ENCODE measurements at regions of chr3 and their contacts with region 1.

Region 1: DNA sequence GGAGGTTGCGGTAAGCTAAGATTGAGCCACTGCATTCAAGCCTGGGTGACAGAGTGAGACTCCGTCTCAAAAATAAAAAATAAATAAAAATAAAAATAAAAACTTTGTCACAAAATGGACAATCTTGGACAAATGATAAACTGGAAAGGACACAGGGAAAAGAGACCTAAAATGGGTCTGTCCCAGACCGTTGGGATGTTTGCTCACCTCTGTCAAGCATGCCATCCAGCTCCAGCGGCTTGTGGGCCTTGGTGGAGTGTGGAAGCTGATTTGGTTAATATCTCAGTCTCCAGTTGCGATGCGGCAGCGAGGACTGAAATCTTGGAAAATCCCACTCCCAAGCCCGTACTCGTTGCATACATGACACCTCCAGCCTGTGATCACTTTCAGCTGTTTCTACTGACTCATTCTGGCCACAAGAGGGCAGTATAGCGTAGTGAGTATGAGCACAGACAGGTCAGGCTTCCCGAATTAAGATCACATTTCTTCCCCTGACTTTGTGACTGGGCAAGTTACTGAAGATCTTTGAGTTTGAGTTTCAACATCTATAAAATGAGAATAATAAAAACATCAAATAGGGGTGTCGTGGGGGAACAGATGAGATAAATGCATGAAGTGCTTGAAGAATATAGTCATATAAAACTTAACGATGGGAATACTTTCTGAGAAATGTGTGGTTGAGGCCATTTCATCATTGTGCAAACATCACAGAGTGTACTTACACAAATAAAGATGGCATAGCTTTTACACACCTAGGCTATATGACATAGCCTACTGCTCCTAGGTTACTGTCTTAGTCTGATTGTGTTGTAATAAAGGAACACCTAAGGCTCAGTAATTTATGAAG is 19.6 kb upstream of the MOBP start:
- DNase-seq: peak; percentile 81
- ATAC-seq: peak; percentile 98
- H3K4me3 ChIP-seq: no peak overlapping the region
- H3K27ac ChIP-seq: no peak overlapping the region
- H3K4me1 ChIP-seq: 0 out of 4 replicates have a peak, but pooled peaks cover 0 to 2% of the 10 kb centered on the region in 2 experiments
- H3K27me3 ChIP-seq: no peaks in the 10 kb centered on the region
- CTCF ChIP-seq: peak; percentile 80 to 91 (median 86)
- POLR2A ChIP-seq: no peak
- RAD21 ChIP-seq: peak; percentile 83

Region 2: DNA sequence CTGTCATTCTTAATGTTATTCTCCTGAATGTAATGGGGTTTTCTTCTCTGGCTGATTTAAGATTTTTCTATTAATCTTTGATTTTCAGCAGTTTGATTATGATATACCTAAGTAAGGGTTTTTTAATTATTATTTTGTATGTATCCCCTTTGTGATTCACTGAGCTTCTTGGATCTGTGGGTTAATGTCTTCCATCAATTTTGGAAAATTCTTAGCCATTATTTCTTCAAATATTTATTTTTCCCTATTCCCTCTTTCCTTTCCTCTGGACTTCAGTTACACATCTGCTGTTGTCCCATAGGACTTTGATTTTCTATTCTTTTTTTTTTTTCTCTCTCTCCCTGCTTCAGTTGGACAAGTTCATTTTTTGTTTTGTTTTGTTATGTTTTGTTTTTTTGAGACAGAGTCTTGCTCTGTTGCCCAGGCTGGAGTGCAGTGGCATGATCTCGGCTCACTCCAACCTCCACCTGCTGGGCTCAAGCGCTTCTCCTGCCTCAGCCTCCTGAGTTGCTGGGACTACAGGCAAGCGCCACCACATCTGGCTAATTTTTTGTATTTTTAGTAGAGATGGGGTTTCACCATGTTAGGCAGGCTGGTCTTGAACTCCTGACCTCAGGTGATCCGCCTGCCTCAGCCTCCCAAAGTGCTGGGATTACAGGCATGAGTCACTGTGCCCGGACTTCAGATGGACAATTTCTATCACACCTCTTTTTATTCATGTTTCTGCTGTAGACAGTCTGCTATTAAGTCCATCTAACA is 1060.7 kb before region 1 on chr3:
- CTCF ChIA-PET with region 1: no interaction called
- POLR2A ChIA-PET with region 1: no interaction called
- RAD21 ChIA-PET with region 1: no interaction called
- intact Hi-C with region 1: no loop called
- DNase-seq: no peak
- ATAC-seq: no peak
- H3K4me3 ChIP-seq: no peak overlapping the region
- H3K27ac ChIP-seq: no peak overlapping the region
- H3K4me1 ChIP-seq: no peaks in the 10 kb centered on the region
- H3K27me3 ChIP-seq: no peaks in the 10 kb centered on the region
- CTCF ChIP-seq: no peak
- POLR2A ChIP-seq: no peak
- RAD21 ChIP-seq: no peak

Region 3: GRCh38 chr3:39021029-39021428 is 426.8 kb before region 1 on chr3:
- CTCF ChIA-PET with region 1: no interaction called
- POLR2A ChIA-PET with region 1: no interaction called
- RAD21 ChIA-PET with region 1: no interaction called
- intact Hi-C with region 1: no loop called
- DNase-seq: no peak
- ATAC-seq: no peak
- H3K4me3 ChIP-seq: no peak overlapping the region
- H3K27ac ChIP-seq: no peak overlapping the region
- H3K4me1 ChIP-seq: no peaks in the 10 kb centered on the region
- H3K27me3 ChIP-seq: peaks cover 20% of the 10 kb centered on the region
- CTCF ChIP-seq: no peak
- POLR2A ChIP-seq: no peak
- RAD21 ChIP-seq: no peak

Region 4: DNA sequence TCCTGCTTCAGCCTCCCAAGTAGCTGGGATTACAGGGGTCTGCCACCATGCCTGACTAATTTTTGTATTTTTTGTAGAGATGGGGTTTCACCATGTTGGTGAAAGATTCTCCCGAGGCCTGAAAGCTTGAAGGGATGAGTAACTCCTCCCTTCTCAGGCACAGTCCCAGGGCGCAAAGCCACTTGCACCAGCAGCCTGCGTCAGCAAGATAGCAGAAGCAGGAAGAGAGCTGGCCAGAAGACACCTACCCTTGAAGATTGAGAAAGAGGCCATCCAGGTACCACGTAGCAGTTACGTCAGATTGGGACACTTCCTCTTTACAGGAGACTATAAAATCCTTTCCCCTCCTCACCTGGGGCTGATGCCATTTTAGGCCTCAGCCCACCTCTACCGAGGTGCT is 11.2 kb after region 1 on chr3:
- CTCF ChIA-PET with region 1: interaction called, 11 read pairs
- POLR2A ChIA-PET with region 1: no interaction called
- RAD21 ChIA-PET with region 1: no interaction called
- intact Hi-C with region 1: no loop called
- DNase-seq: no peak
- ATAC-seq: no peak
- H3K4me3 ChIP-seq: no peak overlapping the region
- H3K27ac ChIP-seq: no peak overlapping the region
- H3K4me1 ChIP-seq: no peaks in the 10 kb centered on the region
- H3K27me3 ChIP-seq: no peaks in the 10 kb centered on the region
- CTCF ChIP-seq: no peak
- POLR2A ChIP-seq: no peak
- RAD21 ChIP-seq: no peak

Region 5: DNA sequence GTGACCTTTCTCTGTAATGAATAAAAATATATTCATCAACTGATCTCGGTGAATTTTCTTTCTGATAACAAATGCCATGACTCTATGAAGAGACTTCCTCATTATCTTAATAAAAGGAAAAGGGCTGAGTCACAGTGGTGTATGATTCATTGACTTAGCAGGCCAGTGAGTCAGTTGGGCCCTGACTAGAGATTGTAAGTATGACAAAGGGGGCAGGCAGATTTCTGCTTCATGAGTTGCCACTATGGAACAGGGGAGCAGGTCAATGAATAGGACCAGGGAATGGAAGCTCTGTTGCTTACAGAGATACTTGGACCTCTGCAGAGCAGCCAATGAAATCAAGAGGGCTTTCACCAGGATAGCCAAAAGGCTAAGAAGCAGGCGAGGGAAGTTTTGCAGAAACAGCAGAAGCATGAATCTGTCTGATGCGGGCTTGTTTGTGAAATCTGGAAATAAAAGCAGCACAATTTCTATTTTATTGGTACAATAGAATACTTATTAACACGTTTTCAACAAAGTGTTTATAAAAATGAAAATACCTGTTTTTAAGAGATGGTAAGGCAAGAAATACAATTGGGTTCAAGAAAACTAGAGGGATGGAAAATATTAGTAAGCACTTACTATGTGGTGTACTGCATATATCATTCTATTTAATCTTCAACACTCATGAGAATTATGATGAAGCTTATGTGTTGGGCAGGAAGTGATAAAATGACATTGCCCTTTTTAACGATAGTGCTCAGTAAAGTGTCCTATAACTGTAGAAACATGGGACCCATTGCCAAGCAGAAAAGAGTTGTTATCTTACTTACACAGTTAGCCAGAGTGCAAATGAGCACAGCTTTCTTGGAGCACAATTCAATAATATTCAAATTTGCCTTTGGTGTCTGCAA is 191.7 kb after region 1 on chr3:
- CTCF ChIA-PET with region 1: no interaction called
- POLR2A ChIA-PET with region 1: no interaction called
- RAD21 ChIA-PET with region 1: no interaction called
- intact Hi-C with region 1: no loop called
- DNase-seq: peak; percentile 88
- ATAC-seq: peak; percentile 98
- H3K4me3 ChIP-seq: peak overlapping the region in 1 of 2 experiments; percentile 22; a peak in 2 of 4 replicates
- H3K27ac ChIP-seq: peak overlapping the region; percentile 51; the same call in 1 of the 2 replicates
- H3K4me1 ChIP-seq: peaks cover 3 to 26% of the 10 kb centered on the region in 2 experiments; a peak in 3 of 4 replicates
- H3K27me3 ChIP-seq: no peaks in the 10 kb centered on the region
- CTCF ChIP-seq: no peak
- POLR2A ChIP-seq: no peak
- RAD21 ChIP-seq: 0 out of 2 replicates have a peak, but pooled peaks have one; percentile 33